RWPE1 (cell line): ENCODE measurements at regions of chr5 and their contacts with region 1.

Region 1: DNA sequence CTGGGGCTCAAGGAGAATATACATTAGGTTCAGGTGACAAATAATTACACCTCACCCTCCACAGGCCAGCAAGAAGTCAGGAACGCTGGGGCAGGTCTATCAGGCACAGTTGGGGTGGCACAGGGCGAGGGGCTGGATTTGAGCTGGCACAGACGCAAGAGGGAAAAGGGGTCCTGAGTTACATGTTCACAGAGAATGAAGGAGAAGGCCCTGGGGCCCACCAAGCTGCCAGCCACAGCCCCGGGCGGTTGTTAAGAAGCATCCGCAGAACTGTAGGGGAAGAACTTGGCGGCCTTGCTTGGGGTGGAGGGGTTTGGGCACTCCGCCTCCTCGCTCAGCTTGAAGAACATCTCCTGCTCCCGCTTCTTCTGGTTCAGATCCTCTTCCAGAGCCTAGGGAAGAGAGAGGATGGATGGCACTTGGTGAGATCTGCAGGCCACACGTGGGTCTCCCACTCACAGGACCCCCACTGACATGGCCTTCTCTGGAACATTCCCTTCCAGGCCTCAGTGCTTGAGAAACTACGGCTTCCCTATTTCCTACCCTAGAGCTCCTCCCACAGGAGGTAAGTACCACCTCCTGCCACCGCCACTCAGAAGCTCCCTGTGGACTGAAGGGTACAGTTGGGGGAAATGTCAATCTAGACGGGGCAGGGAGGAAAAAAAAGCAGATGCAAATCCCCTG is 38.3 kb upstream of the FBXW11 start:
- DNase-seq: no peak
- H3K27ac ChIP-seq: no peak overlapping the region
- CTCF ChIP-seq: no peak

Region 2: DNA sequence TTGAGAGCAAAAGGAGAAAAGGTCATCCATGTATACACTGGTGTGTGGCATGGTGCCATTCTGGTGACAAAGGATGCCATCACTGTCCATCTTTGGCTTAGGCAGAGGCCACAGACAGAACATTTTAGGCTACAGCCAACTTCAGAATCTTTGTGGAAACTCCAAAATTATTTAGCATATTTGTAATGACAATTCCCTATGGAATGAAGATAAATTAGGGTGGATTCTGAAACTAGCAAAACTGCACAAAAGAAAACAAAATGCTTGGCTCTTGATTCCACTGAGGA is 130.8 kb before region 1 on chr5:
- CTCF ChIA-PET with region 1: interaction called, 13 read pairs
- POLR2A ChIA-PET with region 1: no interaction called
- DNase-seq: no peak
- H3K27ac ChIP-seq: no peak overlapping the region
- CTCF ChIP-seq: no peak

Region 3: GRCh38 chr5:172028167-172028566 is 16.6 kb before region 1 on chr5:
- CTCF ChIA-PET with region 1: no interaction called
- POLR2A ChIA-PET with region 1: interaction called, 15 read pairs
- DNase-seq: no peak
- H3K27ac ChIP-seq: no peak overlapping the region
- CTCF ChIP-seq: no peak

Region 4: GRCh38 chr5:172078726-172079345 is 34.1 kb after region 1 on chr5:
- CTCF ChIA-PET with region 1: no interaction called
- POLR2A ChIA-PET with region 1: no interaction called
- DNase-seq: no peak
- H3K27ac ChIP-seq: no peak overlapping the region
- CTCF ChIP-seq: no peak